GM12878 (cell line): ENCODE measurements at regions of chr7 and their contacts with region 1.

Region 1: DNA sequence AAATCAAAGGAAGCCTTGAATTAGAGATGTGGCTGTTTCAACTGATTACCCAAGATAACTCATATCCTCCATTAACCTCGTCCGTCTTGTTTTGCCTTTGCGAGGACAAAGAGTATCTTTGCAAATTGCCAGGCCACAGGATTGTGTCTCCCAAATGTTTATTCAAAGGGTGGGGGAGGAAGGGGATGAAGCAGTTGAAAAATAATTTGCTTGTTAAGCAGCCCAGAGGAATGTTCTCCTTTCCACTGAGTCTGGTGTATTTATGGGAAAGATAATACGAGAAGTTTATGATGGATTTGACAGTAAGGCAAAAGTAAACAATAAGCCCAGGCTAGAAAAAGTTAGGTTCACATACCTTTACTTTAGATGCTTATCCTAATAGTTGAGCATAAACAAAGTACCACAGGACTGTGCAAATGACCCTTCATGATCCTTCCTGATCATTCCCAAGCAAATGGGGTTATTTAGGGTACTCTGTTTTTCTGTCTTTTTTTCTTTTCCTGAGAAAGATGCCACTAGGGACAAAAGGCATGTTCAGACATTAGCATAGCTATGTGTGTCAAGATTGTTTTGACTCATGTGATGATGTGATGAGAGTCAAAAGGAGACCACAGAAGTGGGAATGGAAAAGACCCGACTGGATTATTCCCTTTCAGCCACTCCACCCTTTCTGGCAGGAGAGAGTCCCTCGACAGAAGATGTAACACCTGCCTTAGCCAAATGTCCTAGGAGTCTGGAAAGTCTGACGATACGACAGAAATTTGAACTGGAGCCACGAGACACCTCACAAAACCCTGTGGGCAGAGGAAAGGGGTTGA is 243.0 kb upstream of the GLI3 start:
- DNase-seq: no peak
- ATAC-seq: no peak
- H3K4me3 ChIP-seq: no peak overlapping the region
- H3K27ac ChIP-seq: no peak overlapping the region
- H3K4me1 ChIP-seq: no peaks in the 10 kb centered on the region
- H3K27me3 ChIP-seq: no peaks in the 10 kb centered on the region
- CTCF ChIP-seq: no peak
- EP300 ChIP-seq: no peak
- POLR2A ChIP-seq: no peak
- RAD21 ChIP-seq: no peak

Region 2: GRCh38 chr7:42432644-42433043 is 47.4 kb before region 1 on chr7:
- CTCF ChIA-PET with region 1: no interaction called
- POLR2A ChIA-PET with region 1: no interaction called
- RAD21 ChIA-PET with region 1: no interaction called
- SMC1A ChIA-PET with region 1: no interaction called
- in situ Hi-C with region 1: no loop called
- intact Hi-C with region 1: loop called (anchors 5 kb)
- DNase-seq: no peak
- ATAC-seq: no peak
- H3K4me3 ChIP-seq: no peak overlapping the region
- H3K27ac ChIP-seq: no peak overlapping the region
- H3K4me1 ChIP-seq: no peaks in the 10 kb centered on the region
- H3K27me3 ChIP-seq: no peaks in the 10 kb centered on the region
- CTCF ChIP-seq: no peak
- EP300 ChIP-seq: no peak
- POLR2A ChIP-seq: no peak
- RAD21 ChIP-seq: no peak